ENCODE measurements at regions of chr10 and their contacts with region 1.

Region 1: GRCh38 chr10:119849031-119849789 is 23.4 kb downstream of the MCMBP start:
- DNase-seq: no peak
- ATAC-seq: no peak
- H3K4me3 ChIP-seq: no peak overlapping the region
- H3K27ac ChIP-seq: no peak overlapping the region
- H3K4me1 ChIP-seq: 0 out of 2 replicates have a peak, but pooled peaks cover 3% of the 10 kb centered on the region
- H3K27me3 ChIP-seq: no peaks in the 10 kb centered on the region
- CTCF ChIP-seq: no peak

Region 2: GRCh38 chr10:119132560-119133311 is 716.5 kb before region 1 on chr10:
- CTCF ChIA-PET with region 1: no interaction called
- POLR2A ChIA-PET with region 1: interaction called, 11 read pairs
- in situ Hi-C with region 1: no loop called
- intact Hi-C with region 1: no loop called
- DNase-seq: no peak
- ATAC-seq: 0 out of 2 replicates have a peak, but pooled peaks have one; percentile 37
- H3K4me3 ChIP-seq: no peak overlapping the region
- H3K27ac ChIP-seq: no peak overlapping the region
- H3K4me1 ChIP-seq: peaks cover 6% of the 10 kb centered on the region; the same call in 1 of the 2 replicates
- H3K27me3 ChIP-seq: no peaks in the 10 kb centered on the region
- CTCF ChIP-seq: no peak

Region 3: GRCh38 chr10:119620241-119621077 is 228.8 kb before region 1 on chr10:
- CTCF ChIA-PET with region 1: no interaction called
- POLR2A ChIA-PET with region 1: interaction called, 16 read pairs
- in situ Hi-C with region 1: no loop called
- intact Hi-C with region 1: no loop called
- DNase-seq: no peak
- ATAC-seq: peak; percentile 53
- H3K4me3 ChIP-seq: no peak overlapping the region
- H3K27ac ChIP-seq: no peak overlapping the region
- H3K4me1 ChIP-seq: peaks cover 4% of the 10 kb centered on the region; the same call in 1 of the 2 replicates
- H3K27me3 ChIP-seq: no peaks in the 10 kb centered on the region
- CTCF ChIP-seq: no peak

Region 4: DNA sequence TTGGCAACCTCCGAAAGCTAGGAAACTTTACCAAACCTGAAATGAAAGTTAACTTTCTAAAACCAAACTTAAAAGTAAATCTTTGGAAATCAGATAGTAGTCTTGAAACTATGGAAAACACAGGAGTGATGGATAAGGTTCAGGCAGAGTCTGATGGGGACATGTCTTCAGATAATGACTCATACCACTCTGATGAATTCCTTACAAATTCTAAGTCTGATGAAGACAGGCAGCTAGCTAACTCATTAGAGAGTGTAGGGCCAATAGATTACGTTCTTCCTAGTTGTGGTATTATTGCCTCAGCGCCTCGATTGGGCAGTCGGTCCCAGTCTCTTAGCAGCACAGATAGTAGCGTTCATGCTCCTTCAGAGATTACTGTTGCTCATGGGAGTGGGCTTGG is 22.4 kb before region 1 on chr10:
- CTCF ChIA-PET with region 1: no interaction called
- POLR2A ChIA-PET with region 1: interaction called, 15 read pairs
- in situ Hi-C with region 1: no loop called
- intact Hi-C with region 1: no loop called
- DNase-seq: no peak
- ATAC-seq: no peak
- H3K4me3 ChIP-seq: no peak overlapping the region
- H3K27ac ChIP-seq: no peak overlapping the region
- H3K4me1 ChIP-seq: no peaks in the 10 kb centered on the region
- H3K27me3 ChIP-seq: no peaks in the 10 kb centered on the region
- CTCF ChIP-seq: no peak

Region 5: GRCh38 chr10:120314442-120314841 is 465.2 kb after region 1 on chr10:
- CTCF ChIA-PET with region 1: no interaction called
- POLR2A ChIA-PET with region 1: no interaction called
- in situ Hi-C with region 1: no loop called
- intact Hi-C with region 1: no loop called
- DNase-seq: no peak
- ATAC-seq: no peak
- H3K4me3 ChIP-seq: no peak overlapping the region
- H3K27ac ChIP-seq: no peak overlapping the region
- H3K4me1 ChIP-seq: no peaks in the 10 kb centered on the region
- H3K27me3 ChIP-seq: no peaks in the 10 kb centered on the region
- CTCF ChIP-seq: no peak

Measured in Panc1 (cell line).